ENCODE measurements at regions of chr9 and their contacts with region 1.

Region 1: DNA sequence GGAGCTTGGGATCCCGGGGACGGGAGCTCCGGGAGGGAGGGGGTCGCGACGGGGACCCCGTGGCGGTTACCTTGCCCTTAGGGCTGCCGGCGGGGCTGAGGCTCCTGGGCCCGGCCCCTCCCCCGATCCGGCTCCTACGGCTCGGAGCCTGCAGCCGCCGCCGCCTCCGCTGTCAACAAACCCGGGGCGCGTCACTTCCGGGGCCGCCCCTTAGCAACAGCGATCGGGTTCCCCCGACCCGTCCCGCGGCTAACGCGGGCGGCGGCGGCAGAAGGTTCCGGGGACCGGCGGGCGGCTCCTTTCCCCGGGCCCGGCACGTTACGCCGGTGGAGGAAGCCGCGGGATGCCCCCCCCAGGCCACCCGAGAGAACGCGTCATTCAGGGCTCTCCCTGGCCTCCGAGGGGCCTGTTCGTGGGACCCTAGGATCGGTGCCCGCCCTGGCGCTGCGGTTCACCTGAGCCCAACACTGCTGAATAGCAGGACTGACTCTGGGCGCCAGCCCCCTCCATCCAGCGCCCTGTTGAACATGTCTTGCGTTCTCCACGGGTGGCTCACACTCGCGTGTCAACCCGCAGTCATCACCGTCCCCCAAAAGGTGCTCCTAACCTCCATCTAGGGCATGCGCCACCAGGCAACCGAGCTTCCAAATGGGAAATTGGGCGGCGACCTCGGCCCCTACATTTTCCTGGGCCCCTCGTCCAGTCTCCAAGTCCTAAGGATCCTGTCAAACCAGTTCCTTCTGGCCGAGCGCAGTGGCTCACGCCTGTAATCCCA is at the start of gene ZER1:
- DNase-seq: peak; percentile 83
- ATAC-seq: peak; percentile 96
- H3K4me3 ChIP-seq: peak within 1 kb of the TSS; percentile 99
- H3K27ac ChIP-seq: peak within 1 kb of the TSS; percentile 95
- H3K4me1 ChIP-seq: peaks cover 5% of the 10 kb centered on the region
- H3K27me3 ChIP-seq: no peaks in the 10 kb centered on the region
- CTCF ChIP-seq: no peak
- POLR2A ChIP-seq: peak; percentile 15; the same call in 1 of the 2 replicates
- RAD21 ChIP-seq: no peak
- total RNA-seq, gene ZER1: 7.5 and 7.7 TPM in 2 replicates

Region 2: DNA sequence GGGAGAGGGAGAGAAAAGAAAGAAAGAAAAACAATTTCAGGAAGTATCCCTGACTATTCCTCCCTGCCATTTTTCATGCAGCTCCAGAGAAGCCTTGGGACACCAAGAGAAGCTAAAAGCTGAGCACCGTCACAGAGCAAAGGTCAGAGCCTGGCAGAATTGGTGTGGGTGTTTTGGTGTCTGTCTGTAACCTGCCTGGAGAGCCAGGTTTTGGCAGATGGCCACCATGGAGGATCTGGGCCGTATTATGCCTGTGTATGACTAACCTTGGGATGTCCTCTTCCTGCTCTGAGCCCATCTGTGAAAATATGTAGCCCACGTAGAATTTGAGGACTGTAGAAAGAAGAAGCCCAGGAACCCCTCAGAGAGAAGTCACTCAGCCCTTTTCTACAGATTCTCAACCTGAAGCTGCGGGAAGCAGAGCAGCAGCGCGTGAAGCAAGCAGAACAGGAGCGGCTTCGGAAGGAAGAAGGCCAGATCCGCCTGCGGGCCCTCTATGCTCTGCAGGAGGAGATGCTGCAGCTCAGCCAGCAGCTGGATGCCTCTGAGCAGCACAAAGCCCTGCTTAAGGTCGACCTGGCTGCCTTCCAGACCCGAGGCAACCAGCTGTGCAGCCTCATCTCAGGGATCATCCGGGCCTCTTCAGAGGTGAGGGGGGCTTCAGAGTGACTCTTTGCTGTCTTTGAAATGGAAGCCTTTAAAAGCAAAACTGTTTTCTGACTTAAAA is 248.6 kb before region 1 on chr9:
- CTCF ChIA-PET with region 1: no interaction called
- POLR2A ChIA-PET with region 1: no interaction called
- dilution Hi-C with region 1: no loop called
- in situ Hi-C with region 1: no loop called
- intact Hi-C with region 1: no loop called
- DNase-seq: peak; percentile 67
- ATAC-seq: peak; percentile 90
- H3K4me3 ChIP-seq: no peak overlapping the region
- H3K27ac ChIP-seq: no peak overlapping the region
- H3K4me1 ChIP-seq: peaks cover 7% of the 10 kb centered on the region; the same call in 1 of the 2 replicates
- H3K27me3 ChIP-seq: no peaks in the 10 kb centered on the region
- CTCF ChIP-seq: no peak
- POLR2A ChIP-seq: no peak
- RAD21 ChIP-seq: no peak

Region 3: DNA sequence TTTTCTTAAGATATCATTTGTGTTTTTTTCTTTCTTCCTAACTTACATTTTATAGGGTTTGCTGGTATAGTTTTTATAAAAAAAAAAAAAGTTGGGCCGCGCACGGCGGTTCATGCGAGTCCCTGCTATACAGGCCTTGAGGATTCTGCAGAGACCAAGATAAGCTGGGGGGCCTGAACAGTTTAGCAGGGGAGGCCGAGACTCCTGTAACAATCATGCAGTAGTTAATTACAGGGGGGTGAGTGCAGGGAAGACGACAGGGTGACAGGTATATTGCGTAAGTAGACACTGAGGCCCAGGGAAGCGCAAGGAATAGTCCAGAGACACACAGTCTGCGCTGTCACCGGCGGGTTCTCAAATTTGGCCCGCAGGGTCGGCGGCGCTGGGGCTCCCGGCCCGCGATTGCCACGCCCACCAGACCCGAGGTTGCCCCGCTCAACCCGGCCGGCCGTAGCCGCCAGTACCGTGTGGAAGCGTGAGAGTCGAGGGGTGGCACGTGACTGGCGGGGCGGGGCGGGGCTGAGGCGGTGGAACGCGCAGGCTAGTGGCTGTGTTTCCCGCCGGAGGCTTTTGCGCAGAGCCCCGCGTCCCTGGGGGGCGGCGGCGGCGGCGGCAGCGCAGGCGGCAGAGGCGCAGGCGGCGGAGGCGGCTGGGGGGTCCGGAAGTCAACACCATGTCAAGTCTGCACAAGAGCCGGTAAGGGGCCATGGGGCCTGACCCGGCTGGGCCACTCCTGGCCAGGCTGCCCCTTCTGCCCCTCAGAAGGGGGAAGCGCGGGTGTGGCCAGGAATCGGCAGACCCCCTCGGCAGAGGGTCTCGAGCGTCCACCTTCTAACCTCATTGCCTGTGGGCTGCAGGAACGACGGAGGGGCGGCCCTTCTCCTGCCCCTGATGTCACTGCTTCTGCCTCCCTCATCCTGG is 15.0 kb after region 1 on chr9 and contains the start of gene TBC1D13:
- CTCF ChIA-PET with region 1: interaction called, 4 read pairs
- POLR2A ChIA-PET with region 1: no interaction called
- dilution Hi-C with region 1: no loop called
- in situ Hi-C with region 1: no loop called
- intact Hi-C with region 1: loop called (anchors 2 kb)
- DNase-seq: peak; percentile 70
- ATAC-seq: peak; percentile 95
- H3K4me3 ChIP-seq: peak within 1 kb of the TSS; percentile 81
- H3K27ac ChIP-seq: peak within 1 kb of the TSS; percentile 84
- H3K4me1 ChIP-seq: peaks cover 6% of the 10 kb centered on the region
- H3K27me3 ChIP-seq: no peaks in the 10 kb centered on the region
- CTCF ChIP-seq: no peak
- POLR2A ChIP-seq: no peak
- RAD21 ChIP-seq: peak; percentile 22; the same call in 1 of the 2 replicates
- total RNA-seq, gene TBC1D13: 7.2 and 9.1 TPM in 2 replicates

Region 4: GRCh38 chr9:129160712-129161533 is 389.0 kb after region 1 on chr9:
- CTCF ChIA-PET with region 1: no interaction called
- POLR2A ChIA-PET with region 1: no interaction called
- dilution Hi-C with region 1: no loop called
- in situ Hi-C with region 1: no loop called
- intact Hi-C with region 1: no loop called
- DNase-seq: peak; percentile 78
- ATAC-seq: peak; percentile 79
- H3K4me3 ChIP-seq: no peak overlapping the region
- H3K27ac ChIP-seq: no peak overlapping the region
- H3K4me1 ChIP-seq: peaks cover 12% of the 10 kb centered on the region
- H3K27me3 ChIP-seq: no peaks in the 10 kb centered on the region
- CTCF ChIP-seq: no peak
- POLR2A ChIP-seq: no peak
- RAD21 ChIP-seq: no peak